ENCODE measurements at regions of chr3 and their contacts with region 1.

Region 1: DNA sequence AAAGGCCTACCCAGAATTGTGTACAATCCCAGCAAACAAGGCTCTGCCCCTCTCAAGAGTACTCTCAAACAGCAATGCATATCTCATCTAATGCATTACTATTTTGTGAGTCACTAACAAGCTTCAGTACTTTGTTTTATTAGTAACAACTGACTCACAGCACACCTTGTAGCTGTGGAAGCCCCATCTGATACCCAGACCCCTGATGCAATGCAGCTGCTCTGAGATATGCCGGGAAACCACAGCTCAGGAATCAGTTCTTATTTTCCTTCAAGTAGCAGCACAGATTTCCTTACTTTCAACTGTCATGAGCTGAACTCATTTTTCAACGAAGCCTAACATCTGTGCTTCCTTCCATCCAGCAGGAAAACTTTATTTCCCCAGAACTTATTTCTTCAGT is 37.8 kb downstream of the CCNL1 start:
- DNase-seq: no peak
- H3K4me3 ChIP-seq: no peak overlapping the region
- CTCF ChIP-seq: no peak

Region 2: GRCh38 chr3:157110761-157111278 is 11.3 kb before region 1 on chr3:
- CTCF ChIA-PET with region 1: interaction called, 15 read pairs
- POLR2A ChIA-PET with region 1: interaction called, 3 read pairs
- DNase-seq: no peak
- H3K4me3 ChIP-seq: no peak overlapping the region
- CTCF ChIP-seq: no peak